Panc1 (cell line): ENCODE measurements at regions of chr6 and their contacts with region 1.

Region 1: DNA sequence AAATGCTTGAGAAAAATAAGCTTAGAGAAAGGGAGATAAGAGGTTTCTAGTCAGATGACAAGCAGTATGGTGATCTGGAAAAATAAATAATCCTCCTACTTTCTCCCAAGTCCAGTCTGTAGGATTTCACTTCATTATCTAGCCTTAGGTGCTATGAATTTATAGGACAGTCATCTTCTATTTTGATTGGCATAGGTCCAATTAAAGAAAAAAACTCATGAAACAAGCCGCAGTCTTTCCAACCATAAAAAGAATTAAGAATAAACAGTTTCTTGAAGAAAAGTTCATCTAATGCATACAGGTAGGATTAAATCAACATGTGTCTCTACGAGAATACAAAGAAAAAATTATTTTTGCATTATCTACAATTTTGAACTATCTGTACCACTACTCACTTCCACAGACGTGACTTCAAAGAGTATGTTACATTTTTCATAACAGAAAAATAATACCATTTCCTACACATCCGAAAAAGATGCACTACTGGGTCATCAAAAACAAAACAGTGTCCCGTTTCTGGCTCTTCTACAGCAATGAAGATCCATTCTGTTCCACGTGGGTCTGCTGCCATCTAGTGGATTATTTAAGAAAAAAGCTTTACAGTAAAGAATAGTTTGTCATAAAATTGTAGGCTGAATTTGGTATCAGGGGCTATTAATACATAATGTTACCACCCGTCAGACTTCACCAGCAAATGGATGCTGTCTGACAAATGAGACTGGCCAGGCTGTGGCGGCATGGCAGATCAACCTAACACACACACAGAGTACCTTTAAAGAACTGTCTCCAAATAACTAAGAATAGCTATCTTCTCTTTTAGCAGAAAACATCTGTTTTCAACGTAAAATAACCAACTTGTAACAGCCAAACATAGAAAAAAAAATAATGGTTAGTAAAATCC is 28.9 kb downstream of the STX7 start:
- DNase-seq: peak; percentile 41
- ATAC-seq: peak; percentile 82
- H3K4me3 ChIP-seq: no peak overlapping the region
- H3K27ac ChIP-seq: no peak overlapping the region
- H3K4me1 ChIP-seq: no peaks in the 10 kb centered on the region
- H3K27me3 ChIP-seq: no peaks in the 10 kb centered on the region
- CTCF ChIP-seq: peak; percentile 80

Region 2: GRCh38 chr6:131914967-131915751 is 568.9 kb before region 1 on chr6:
- CTCF ChIA-PET with region 1: no interaction called
- POLR2A ChIA-PET with region 1: no interaction called
- in situ Hi-C with region 1: no loop called
- intact Hi-C with region 1: loop called (anchors 5 kb)
- DNase-seq: peak; percentile 53
- ATAC-seq: peak; percentile 92
- H3K4me3 ChIP-seq: no peak overlapping the region
- H3K27ac ChIP-seq: no peak overlapping the region
- H3K4me1 ChIP-seq: no peaks in the 10 kb centered on the region; the same call in 1 of the 2 replicates
- H3K27me3 ChIP-seq: peaks cover 11% of the 10 kb centered on the region; the same call in 1 of the 2 replicates
- CTCF ChIP-seq: peak; percentile 87

Region 3: GRCh38 chr6:132218059-132218696 is 265.9 kb before region 1 on chr6:
- CTCF ChIA-PET with region 1: no interaction called
- POLR2A ChIA-PET with region 1: no interaction called
- in situ Hi-C with region 1: no loop called
- intact Hi-C with region 1: no loop called
- DNase-seq: no peak
- ATAC-seq: no peak
- H3K4me3 ChIP-seq: no peak overlapping the region
- H3K27ac ChIP-seq: no peak overlapping the region
- H3K4me1 ChIP-seq: no peaks in the 10 kb centered on the region; the same call in 1 of the 2 replicates
- H3K27me3 ChIP-seq: no peaks in the 10 kb centered on the region
- CTCF ChIP-seq: peak; percentile 65; the same call in 1 of the 2 replicates

Region 4: DNA sequence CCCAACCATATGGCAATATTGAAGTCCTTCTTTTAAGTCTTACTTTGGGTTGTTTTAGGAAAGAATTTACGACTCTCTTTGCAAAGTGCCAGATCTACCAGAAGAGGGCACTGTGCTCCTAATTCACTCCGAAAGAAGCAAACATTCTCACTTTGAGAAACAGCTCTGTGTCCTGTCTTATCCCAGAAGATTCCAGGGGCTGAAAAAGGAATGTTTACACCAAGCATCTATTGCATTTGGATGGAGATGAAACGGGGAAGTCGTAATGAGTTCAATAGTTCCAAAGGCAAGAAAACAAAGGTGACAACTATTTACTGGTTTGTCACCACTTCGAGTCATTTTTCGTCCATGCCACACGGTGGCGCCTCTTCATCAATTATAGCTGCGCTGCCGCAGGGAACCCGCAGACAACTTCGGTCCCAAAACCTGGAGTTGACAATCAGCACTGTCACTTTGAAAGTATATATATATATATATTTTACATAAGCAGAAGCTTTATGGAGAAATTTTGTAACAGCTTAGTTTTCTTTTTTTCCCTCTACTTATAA is 204.4 kb before region 1 on chr6:
- CTCF ChIA-PET with region 1: interaction called, 32 read pairs
- POLR2A ChIA-PET with region 1: no interaction called
- in situ Hi-C with region 1: no loop called
- intact Hi-C with region 1: loop called (anchors 1 kb)
- DNase-seq: peak; percentile 72
- ATAC-seq: peak; percentile 86
- H3K4me3 ChIP-seq: peak overlapping the region; percentile 29 to 58
- H3K27ac ChIP-seq: no peak overlapping the region
- H3K4me1 ChIP-seq: no peaks in the 10 kb centered on the region
- H3K27me3 ChIP-seq: no peaks in the 10 kb centered on the region
- CTCF ChIP-seq: peak; percentile 94

Region 5: DNA sequence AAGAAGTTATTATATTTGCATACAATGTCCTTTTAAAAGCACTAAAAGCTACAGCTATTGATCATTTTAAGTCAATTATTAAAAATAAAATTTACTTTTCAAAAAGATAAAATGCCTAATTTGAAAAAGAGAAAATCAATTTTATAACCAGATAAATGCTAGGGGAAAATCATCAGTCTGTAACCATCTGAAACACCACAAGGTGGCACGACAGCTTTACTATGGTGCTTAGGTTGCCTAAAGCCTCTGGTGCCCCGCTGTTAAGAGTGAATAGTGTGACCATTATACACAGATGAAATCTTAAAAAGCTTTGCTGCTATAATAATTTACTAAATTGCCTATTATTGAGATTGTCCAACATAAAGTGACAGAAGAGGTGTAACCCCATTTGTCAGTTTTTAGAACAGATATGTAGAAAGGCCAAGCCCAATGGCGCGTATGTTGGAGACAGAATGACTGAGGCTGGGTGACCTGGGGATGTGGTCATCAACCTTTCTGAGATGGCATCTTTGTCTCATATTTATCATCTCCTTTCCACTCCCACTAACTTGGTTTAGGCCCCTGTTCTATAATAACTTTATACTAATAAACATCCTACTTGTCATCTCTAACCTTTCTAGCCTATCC is 183.6 kb before region 1 on chr6:
- CTCF ChIA-PET with region 1: interaction called, 3 read pairs
- POLR2A ChIA-PET with region 1: no interaction called
- in situ Hi-C with region 1: no loop called
- intact Hi-C with region 1: loop called (anchors 1 kb)
- DNase-seq: peak; percentile 20
- ATAC-seq: peak; percentile 93
- H3K4me3 ChIP-seq: no peak overlapping the region
- H3K27ac ChIP-seq: no peak overlapping the region
- H3K4me1 ChIP-seq: no peaks in the 10 kb centered on the region
- H3K27me3 ChIP-seq: no peaks in the 10 kb centered on the region
- CTCF ChIP-seq: peak; percentile 69

Region 6: GRCh38 chr6:132380358-132381029 is 103.5 kb before region 1 on chr6:
- CTCF ChIA-PET with region 1: no interaction called
- POLR2A ChIA-PET with region 1: no interaction called
- in situ Hi-C with region 1: no loop called
- intact Hi-C with region 1: no loop called
- DNase-seq: no peak
- ATAC-seq: no peak
- H3K4me3 ChIP-seq: no peak overlapping the region
- H3K27ac ChIP-seq: no peak overlapping the region
- H3K4me1 ChIP-seq: no peaks in the 10 kb centered on the region
- H3K27me3 ChIP-seq: no peaks in the 10 kb centered on the region; the same call in 1 of the 2 replicates
- CTCF ChIP-seq: no peak